HEK293T (cell line): ENCODE measurements at regions of chr3 and their contacts with region 1.

Region 1: DNA sequence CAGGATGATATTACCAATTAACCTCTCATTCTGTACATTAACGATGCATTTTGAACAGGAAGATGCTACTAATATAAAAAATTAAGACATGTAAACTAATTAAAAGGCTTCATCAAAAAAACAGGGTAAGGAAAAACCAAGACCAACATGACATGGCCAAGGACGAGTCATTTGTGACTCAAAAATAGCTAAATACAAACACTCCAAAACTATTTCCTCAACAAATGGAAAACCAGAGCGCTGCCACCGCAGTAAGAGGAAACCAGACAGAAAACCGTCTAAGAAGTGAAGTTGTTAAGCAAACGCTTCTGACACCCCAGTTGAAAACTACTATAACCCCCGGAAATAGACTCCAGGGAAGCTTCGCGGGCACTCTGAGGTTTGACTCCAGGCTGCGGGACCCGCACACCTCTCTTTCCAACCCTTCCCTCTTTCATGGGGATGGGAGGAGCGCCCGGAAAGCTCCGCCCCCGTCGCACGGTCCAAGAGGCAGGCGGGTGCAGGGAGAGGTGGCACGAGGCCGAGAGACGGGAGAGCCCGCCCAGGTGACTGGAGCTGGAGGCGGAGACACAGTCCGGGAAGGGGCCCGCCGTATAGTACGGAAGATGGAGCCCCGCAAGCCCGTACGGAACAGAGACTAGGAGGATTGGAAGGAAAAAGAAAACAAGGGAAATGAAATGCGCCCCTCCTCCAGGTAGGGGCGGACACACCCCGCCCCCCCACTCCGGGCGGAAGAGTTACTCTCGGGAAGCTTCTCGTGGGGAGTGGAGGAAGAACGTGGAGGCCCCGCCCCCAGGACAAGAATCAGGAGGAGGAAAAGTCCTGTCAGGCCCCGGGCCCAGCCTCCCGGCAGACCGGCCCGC is 708 bp downstream of the DCAF1 start:
- DNase-seq: peak; percentile 89

Region 2: DNA sequence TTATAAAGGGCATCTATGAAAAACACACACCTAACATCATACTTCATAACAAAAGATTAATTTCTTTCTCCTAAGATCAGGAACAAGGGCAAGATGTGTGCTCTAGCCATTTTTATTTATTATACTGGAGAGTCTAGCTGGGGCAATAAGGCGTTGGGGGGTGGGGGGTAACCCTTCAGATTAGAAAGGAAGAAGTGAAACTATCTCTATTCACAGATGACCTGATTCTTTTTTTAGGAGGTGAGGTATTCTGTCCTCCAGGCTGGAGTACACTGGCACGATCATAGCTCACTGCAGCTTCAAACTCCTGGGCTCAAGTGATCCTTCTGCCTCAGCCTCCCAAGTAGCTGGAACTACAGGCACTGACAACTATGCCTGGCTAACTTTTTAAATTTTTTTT is 203.5 kb before region 1 on chr3:
- CTCF ChIA-PET with region 1: no interaction called
- POLR2A ChIA-PET with region 1: no interaction called
- DNase-seq: no peak

Region 3: DNA sequence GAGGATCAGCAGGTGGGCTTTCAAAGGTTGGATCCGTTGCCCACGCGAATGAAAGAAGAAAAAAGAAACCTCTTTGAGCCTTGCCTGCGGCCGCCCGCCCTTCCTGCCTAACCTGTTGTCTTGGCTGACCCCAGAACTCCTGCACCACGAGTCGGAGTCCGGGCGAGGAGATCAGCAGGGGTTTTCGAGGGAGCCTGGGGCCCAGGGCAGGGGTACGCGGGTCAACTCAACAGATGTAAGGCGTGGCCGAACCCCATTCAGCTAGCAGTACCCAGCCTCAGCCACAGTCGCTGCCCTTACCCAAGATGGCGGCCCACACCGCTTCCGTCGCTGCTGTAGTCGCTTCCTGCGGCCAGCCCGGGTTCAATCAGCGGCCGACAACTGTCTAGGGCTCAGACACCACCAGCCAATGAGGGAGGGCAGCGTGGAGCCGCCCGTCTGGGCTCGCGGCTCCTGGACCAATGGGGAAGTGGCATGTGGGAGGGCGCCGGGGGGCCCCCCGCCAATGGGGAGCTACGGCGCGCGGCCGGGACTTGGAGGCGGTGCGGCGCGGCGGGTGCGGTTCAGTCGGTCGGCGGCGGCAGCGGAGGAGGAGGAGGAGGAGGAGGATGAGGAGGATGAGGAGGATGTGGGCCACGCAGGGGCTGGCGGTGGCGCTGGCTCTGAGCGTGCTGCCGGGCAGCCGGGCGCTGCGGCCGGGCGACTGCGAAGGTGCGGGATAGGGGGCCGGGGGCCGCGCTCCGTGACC is 114.2 kb before region 1 on chr3 and contains the start of gene MANF:
- CTCF ChIA-PET with region 1: interaction called, 4 read pairs
- POLR2A ChIA-PET with region 1: interaction called, 16 read pairs
- DNase-seq: peak; percentile 98

Region 4: DNA sequence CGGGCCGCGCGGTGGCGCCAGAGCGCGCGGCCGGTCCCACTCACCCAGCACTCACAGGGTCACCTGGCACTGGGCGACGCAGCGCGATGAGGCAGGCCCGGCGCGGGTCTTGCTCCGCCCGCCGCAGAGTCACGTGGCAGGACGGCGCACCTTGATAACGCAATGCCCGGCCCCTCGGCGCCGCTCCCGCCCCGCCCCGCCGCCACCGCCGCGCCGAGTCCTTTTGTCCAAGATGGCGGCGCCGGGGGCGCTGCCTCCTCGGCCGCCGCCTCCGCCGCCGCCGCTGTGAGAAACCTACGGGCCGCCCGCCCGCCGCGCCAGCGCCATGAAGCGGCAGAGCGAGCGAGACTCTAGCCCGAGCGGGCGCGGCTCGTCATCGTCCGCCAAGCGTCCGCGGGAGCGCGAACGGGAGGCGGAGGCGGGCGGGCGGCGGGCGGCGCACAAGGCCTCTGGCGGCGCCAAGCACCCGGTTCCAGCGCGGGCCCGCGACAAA is 108.0 kb before region 1 on chr3 and contains the start of gene RBM15B:
- CTCF ChIA-PET with region 1: interaction called, 4 read pairs
- POLR2A ChIA-PET with region 1: interaction called, 16 read pairs
- DNase-seq: peak; percentile 95

Region 5: GRCh38 chr3:51422211-51422610 is 76.9 kb before region 1 on chr3:
- CTCF ChIA-PET with region 1: no interaction called
- POLR2A ChIA-PET with region 1: no interaction called
- DNase-seq: no peak

Region 6: GRCh38 chr3:51511000-51511399 is 11.9 kb after region 1 on chr3:
- CTCF ChIA-PET with region 1: interaction called, 7 read pairs
- POLR2A ChIA-PET with region 1: interaction called, 10 read pairs
- DNase-seq: no peak

Region 7: GRCh38 chr3:51538459-51539290 is 39.6 kb after region 1 on chr3 and contains the start of gene RAD54L2:
- CTCF ChIA-PET with region 1: interaction called, 3 read pairs
- POLR2A ChIA-PET with region 1: interaction called, 23 read pairs
- DNase-seq: peak; percentile 87

Region 8: GRCh38 chr3:51670823-51671733 is 172.0 kb after region 1 on chr3 and contains the start of gene TEX264:
- CTCF ChIA-PET with region 1: interaction called, 53 read pairs
- POLR2A ChIA-PET with region 1: interaction called, 75 read pairs
- DNase-seq: peak; percentile 96

Region 9: DNA sequence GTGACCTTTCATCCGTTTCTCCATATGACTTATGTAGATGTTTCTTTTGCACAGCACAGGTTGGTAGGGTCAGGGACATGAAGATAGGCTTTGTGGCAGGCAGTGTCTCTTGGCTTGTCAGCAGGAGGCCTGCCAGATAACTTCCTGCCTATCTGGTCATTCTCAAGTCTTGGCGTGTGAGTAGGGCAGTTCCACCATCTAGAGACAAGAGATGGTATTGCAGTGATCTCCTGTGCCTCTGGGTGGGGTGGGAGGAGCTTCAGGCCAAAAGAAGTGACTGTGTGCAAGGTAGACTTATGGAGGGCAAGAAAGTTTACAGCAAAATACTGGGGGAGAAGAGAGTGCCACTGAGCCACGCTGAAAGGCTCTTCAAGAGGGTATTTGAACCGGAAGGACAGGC is 183.0 kb after region 1 on chr3:
- CTCF ChIA-PET with region 1: interaction called, 19 read pairs
- POLR2A ChIA-PET with region 1: interaction called, 29 read pairs
- DNase-seq: peak; percentile 77